ENCODE measurements at regions of chr5 and their contacts with region 1.

Region 1: GRCh38 chr5:132490486-132491367 is at the start of gene IRF1:
- DNase-seq: peak; percentile 96 to 97
- ATAC-seq: peak; percentile 90 to 95 (median 93)
- H3K4me3 ChIP-seq: peak within 1 kb of the TSS; percentile 79 to 96 (median 90)
- H3K27ac ChIP-seq: peak within 1 kb of the TSS; percentile 92 to 100 (median 99)
- H3K4me1 ChIP-seq: peaks cover 30 to 84% (median 69%) of the 10 kb centered on the region in 9 donors
- H3K27me3 ChIP-seq: no peaks in the 10 kb centered on the region
- CTCF ChIP-seq: peak in 3 of 9 donors; percentile 16 to 38 (median 20)
- total RNA-seq, gene IRF1: 9.5 to 146 (median 19.2) TPM

Region 2: DNA sequence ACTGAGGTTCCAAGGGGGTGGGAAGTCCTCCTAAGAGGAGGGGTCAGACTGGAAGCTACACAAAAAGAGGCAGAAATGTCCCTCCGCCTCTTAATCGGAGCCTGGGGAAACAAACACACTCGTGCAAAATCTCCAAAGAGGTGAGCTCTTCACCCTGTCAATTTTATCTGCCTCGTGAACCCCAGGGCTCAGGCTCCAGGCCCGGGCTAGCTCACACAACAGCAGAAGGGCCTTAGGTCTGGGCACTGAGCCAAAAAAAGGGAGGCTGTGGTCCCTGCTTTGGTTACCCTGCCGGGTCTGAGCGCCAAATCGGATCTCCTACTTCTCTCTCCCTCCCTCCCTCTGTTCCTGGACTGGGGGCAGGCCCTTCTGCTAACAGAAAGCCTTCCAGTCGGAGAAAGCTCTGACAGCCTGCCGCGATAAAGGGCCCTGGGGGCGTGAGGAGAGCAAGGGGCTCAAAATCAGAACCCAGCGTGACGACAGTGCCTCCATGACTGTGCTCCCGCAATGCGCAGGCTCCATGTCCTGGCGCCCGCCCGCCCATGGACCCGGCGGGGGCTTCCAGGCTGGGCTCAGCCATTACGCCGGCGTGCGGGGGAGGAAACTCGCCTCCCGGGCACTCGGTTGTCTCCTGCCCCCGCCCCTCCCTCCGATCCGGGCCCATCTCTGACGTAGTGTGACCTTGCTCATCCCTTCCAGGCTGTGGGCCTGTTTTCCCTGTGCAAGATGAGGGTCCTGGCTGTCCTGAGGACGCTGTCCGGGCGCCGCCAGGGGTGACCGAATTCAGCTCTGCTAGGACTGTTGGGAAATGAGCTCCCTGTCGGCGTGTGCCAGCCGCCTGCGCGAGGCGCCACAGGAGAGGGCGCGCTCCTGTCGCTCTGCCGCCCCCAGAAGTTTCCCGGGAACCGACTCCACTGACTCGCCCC is 197.4 kb before region 1 on chr5:
- intact Hi-C with region 1: loop called in 5 of 10 experiments (anchors 10 kb)
- DNase-seq: peak; percentile 87 to 93
- ATAC-seq: peak; percentile 78 to 87 (median 84)
- H3K4me3 ChIP-seq: peak overlapping the region; percentile 18 to 83 (median 70)
- H3K27ac ChIP-seq: peak overlapping the region; percentile 83 to 100 (median 98)
- H3K4me1 ChIP-seq: peaks cover 5 to 39% (median 35%) of the 10 kb centered on the region in 9 donors
- H3K27me3 ChIP-seq: no peaks in the 10 kb centered on the region
- CTCF ChIP-seq: peak in 3 of 9 donors; percentile 33 to 40 (median 40)

Region 3: GRCh38 chr5:132410451-132411381 is 80.0 kb before region 1 on chr5:
- intact Hi-C with region 1: loop called in 4 of 10 experiments (anchors 2 to 5 kb)
- DNase-seq: peak; percentile 86 to 88
- ATAC-seq: peak; percentile 78 to 88 (median 82)
- H3K4me3 ChIP-seq: peak overlapping the region; percentile 64 to 87 (median 82)
- H3K27ac ChIP-seq: peak overlapping the region; percentile 97 to 100 (median 99)
- H3K4me1 ChIP-seq: peaks cover 0 to 76% (median 71%) of the 10 kb centered on the region in 9 donors
- H3K27me3 ChIP-seq: no peaks in the 10 kb centered on the region
- CTCF ChIP-seq: peak; percentile 43 to 77 (median 73)

Region 4: DNA sequence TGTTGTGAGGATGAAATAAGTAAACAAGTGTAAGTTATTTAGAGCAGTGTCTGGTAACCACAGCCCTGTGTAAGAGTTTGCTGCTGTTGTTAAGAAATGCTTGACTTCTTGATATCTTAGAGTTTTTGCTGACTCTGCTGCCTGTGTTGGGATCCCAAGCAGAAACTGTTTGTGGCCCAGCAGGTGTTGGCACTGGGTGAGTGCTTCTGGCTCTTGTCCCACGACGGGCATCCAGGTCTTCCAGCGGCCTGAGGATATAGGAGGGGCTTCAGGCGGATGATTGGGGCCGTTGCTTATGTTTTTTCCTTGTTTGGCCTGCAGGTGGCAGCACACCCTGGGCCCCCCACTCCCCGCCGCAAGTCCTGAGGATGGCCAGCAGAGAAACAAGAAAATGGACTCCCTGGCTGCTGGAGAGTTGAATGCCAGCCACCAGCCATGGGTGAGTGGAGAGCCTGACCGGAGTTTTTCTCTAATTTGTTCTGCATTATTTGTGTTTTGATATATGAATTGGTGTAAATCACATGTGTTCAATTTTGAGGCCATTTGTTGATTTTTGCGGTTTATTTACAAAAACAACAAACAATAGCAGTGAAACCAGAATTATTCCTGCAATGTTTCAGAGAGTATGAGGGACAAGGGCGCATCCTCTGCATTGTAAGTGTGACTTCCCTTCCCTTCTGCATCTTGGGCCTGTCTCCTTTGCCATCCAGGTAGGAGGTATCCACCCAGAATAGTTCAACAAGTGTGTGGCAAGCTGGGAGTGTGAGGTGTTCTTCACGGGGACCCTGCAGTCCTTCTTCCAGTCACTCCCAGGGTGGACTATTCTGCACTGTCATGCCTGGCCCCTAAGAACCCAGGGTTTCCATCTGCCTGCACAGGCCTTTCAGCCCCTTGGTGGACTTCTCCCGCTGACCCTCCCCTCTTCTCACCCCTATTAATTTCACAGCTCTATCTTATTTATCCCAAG is 70.9 kb before region 1 on chr5:
- intact Hi-C with region 1: loop called in 8 of 10 experiments (anchors 2 to 5 kb)
- DNase-seq: peak; percentile 73 to 78
- ATAC-seq: peak; percentile 50 to 82 (median 68)
- H3K4me3 ChIP-seq: peak overlapping the region in 2 of 10 donors; percentile 10 to 15
- H3K27ac ChIP-seq: peak overlapping the region in 9 of 10 donors; percentile 72 to 100 (median 86)
- H3K4me1 ChIP-seq: peaks cover 35 to 100% (median 94%) of the 10 kb centered on the region in 9 donors
- H3K27me3 ChIP-seq: no peaks in the 10 kb centered on the region
- CTCF ChIP-seq: peak; percentile 79 to 93 (median 89)

Region 5: GRCh38 chr5:132466433-132467286 is 24.1 kb before region 1 on chr5:
- intact Hi-C with region 1: loop called in 1 of 10 experiments (anchors 2 kb)
- DNase-seq: peak in 1 of 2 donors; percentile 55
- ATAC-seq: peak in 7 of 8 donors; percentile 29 to 62 (median 58)
- H3K4me3 ChIP-seq: peak overlapping the region in 2 of 10 donors; percentile 11 to 17
- H3K27ac ChIP-seq: peak overlapping the region in 9 of 10 donors; percentile 27 to 82 (median 67)
- H3K4me1 ChIP-seq: peaks cover 14 to 100% (median 83%) of the 10 kb centered on the region in 9 donors
- H3K27me3 ChIP-seq: no peaks in the 10 kb centered on the region
- CTCF ChIP-seq: no peak